ENCODE measurements at regions of chr20 and their contacts with region 1.

Region 1: DNA sequence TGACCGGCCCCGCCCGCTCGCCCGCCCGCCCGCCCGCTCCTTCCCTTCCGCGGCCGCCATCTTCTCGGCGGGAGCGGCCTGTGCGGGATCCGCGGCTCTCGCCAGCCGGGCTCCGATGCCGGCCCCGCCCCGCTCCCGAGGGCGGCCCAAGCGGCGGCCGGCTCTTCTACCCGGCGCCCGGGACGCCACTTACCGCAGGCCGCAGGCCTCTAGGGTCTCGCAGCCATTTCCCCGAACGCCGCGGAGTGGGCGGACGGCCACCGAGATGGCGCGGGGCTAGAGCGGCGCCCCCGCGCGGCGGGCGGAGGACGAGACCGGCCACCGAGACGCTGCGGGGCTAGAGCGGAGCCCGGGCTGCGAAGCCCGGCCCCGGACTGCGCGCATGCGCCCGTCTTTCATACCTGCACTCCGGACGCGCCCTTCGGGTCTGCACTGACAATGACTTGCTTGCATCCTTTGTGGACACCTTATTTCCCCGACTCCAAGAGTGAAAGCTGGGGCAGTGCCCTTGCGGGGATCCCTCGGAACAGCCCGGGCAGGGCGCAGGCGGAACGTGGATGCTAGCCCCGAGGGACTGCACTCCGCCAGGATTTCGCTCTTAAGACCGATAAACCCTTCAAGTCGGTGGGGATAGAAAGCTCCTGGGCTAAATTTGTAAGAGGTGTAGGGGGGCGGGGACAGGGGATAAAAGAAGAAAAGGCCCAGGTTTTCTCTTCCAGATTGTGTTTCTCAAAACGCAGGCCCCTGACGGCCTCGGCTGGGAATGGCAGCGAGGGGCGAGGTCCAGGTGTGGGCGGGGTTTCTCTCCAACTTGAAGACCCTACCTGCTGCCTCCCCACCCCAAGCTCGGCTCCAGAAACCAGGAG is at the start of gene DIDO1:
- DNase-seq: peak in 1 of 2 experiments; percentile 90
- H3K4me3 ChIP-seq: peak within 1 kb of the TSS; percentile 76 to 99 (median 94)
- H3K27ac ChIP-seq: peak within 1 kb of the TSS; percentile 86
- H3K4me1 ChIP-seq: peaks cover 9 to 39% (median 23%) of the 10 kb centered on the region in 4 experiments
- H3K27me3 ChIP-seq: no peaks in the 10 kb centered on the region
- CTCF ChIP-seq: peak; percentile 28 to 45 (median 43)
- EP300 ChIP-seq: no peak
- POLR2A ChIP-seq: peak in 1 of 2 experiments; percentile 40
- RAD21 ChIP-seq: no peak
- total RNA-seq, gene DIDO1: 82.8 and 83.2 TPM in 2 replicates

Region 2: GRCh38 chr20:62815066-62815991 is 111.1 kb before region 1 on chr20:
- CTCF ChIA-PET with region 1: no interaction called
- POLR2A ChIA-PET with region 1: interaction called, 10 read pairs
- DNase-seq: peak; percentile 54 to 73
- H3K4me3 ChIP-seq: peak overlapping the region; percentile 54 to 71 (median 63)
- H3K27ac ChIP-seq: no peak overlapping the region; the same call in 1 of the 2 replicates
- H3K4me1 ChIP-seq: peaks cover 0 to 17% (median 11%) of the 10 kb centered on the region in 4 experiments; a peak in 5 of 7 replicates
- H3K27me3 ChIP-seq: peaks cover 0 to 8% (median 2%) of the 10 kb centered on the region in 4 experiments; a peak in 2 of 7 replicates
- CTCF ChIP-seq: no peak
- EP300 ChIP-seq: no peak
- POLR2A ChIP-seq: no peak
- RAD21 ChIP-seq: no peak

Region 3: GRCh38 chr20:62875419-62876361 is 50.8 kb before region 1 on chr20:
- CTCF ChIA-PET with region 1: interaction called, 4 read pairs
- POLR2A ChIA-PET with region 1: interaction called, 15 read pairs
- DNase-seq: no peak
- H3K4me3 ChIP-seq: no peak overlapping the region
- H3K27ac ChIP-seq: no peak overlapping the region
- H3K4me1 ChIP-seq: peaks cover 0 to 3% (median 0%) of the 10 kb centered on the region in 4 experiments; a peak in 3 of 7 replicates
- H3K27me3 ChIP-seq: no peaks in the 10 kb centered on the region
- CTCF ChIP-seq: no peak
- EP300 ChIP-seq: no peak
- POLR2A ChIP-seq: no peak
- RAD21 ChIP-seq: no peak

Region 4: GRCh38 chr20:62914970-62915457 is 11.5 kb before region 1 on chr20:
- CTCF ChIA-PET with region 1: interaction called, 58 read pairs
- POLR2A ChIA-PET with region 1: interaction called, 156 read pairs
- DNase-seq: no peak
- H3K4me3 ChIP-seq: no peak overlapping the region; a peak in 1 of 8 replicates
- H3K27ac ChIP-seq: peak overlapping the region; percentile 35; the same call in 1 of the 2 replicates
- H3K4me1 ChIP-seq: peaks cover 14 to 37% (median 34%) of the 10 kb centered on the region in 4 experiments; a peak in 6 of 7 replicates
- H3K27me3 ChIP-seq: no peaks in the 10 kb centered on the region
- CTCF ChIP-seq: no peak
- EP300 ChIP-seq: peak in 1 of 2 experiments; percentile 58; a peak in 1 of 3 replicates
- POLR2A ChIP-seq: peak; percentile 54 to 68; a peak in 2 of 3 replicates
- RAD21 ChIP-seq: no peak

Region 5: DNA sequence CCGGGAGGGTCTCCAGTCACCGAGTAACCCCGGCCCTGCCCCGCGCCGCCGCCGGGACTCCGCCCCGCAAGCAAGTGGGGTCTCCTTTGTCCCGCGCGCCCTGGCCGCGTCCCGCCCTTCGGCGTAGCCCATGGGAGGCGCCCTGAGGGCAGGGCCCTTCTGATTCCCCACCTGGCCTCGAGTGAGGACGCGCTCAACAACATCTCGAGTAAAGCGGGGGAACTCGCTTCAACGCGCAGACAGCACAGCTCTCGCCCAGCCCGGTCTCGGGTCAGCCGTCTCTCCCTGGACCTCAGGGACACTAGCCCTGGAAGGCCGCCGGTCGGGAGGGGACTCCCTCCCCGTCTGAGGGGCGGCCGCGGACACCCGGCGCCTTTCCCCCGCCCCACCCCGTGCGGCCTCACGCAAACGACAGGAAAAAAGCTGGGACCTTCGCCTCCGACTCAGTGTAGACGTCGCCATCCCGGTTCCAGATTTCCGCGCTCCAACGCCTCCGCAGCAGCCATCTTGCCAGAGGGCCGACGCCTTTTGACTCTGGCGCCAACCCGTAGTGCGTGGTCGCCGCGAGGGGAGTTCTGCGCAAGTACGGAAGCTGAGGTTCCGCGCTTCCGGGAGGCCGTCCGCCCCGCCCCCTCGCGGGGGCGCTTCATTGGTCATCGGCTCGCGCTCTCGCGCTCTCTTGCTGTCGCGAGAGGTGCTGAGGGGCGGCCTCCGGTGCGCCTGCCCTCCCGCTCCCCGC is 11.1 kb after region 1 on chr20:
- CTCF ChIA-PET with region 1: interaction called, 22 read pairs
- POLR2A ChIA-PET with region 1: interaction called, 363 read pairs
- DNase-seq: peak; percentile 91 to 96
- H3K4me3 ChIP-seq: peak overlapping the region; percentile 89 to 98 (median 94)
- H3K27ac ChIP-seq: peak overlapping the region; percentile 95
- H3K4me1 ChIP-seq: peaks cover 3 to 21% (median 11%) of the 10 kb centered on the region in 4 experiments
- H3K27me3 ChIP-seq: no peaks in the 10 kb centered on the region
- CTCF ChIP-seq: no peak
- EP300 ChIP-seq: no peak
- POLR2A ChIP-seq: peak; percentile 92 to 95; a peak in 2 of 3 replicates
- RAD21 ChIP-seq: no peak

Region 6: DNA sequence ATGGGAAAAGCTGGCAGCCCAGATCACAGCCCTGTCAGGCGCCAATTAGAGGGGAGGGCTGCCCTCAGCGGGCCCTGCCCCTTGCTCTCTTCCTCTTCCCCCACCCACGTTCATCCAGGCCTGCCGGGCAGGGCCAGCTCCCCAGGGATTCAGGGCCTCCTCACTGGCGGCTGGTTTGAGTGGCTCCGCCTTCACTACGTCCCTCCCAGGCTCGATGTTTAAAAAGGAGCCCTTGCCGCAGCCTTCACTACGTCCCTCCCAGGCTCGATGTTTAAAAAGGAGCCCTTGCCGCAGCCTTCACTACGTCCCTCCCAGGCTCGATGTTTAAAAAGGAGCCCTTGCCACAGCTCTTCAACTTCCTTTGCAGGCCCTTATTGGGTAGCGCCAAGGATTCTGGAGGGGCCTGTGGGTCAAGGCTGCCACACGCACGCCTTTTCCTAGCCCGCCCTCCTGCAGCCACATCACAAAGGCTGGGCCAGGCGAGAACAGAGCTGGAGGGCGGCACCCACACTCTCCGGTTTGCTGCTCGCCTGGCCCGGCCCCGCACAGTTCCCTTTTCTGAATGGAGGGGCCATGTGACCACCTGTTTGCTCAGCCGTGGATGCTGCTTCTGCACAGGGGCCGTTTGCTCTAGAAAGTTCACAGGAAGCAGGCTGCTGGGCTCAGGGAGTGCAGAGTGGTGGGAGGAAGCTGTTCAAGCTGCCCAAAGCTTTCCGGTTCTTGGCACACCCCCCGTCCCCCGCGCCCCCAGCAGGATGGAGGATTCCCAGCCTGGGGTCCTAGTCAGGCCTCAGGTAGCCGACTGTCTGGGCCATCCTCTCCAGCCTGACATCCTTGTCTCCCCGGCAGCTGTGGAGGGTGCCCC is 27.6 kb after region 1 on chr20:
- CTCF ChIA-PET with region 1: interaction called, 6 read pairs
- POLR2A ChIA-PET with region 1: interaction called, 363 read pairs
- DNase-seq: peak in 1 of 2 experiments; percentile 67
- H3K4me3 ChIP-seq: peak overlapping the region; percentile 1 to 61 (median 40); a peak in 6 of 8 replicates
- H3K27ac ChIP-seq: no peak overlapping the region
- H3K4me1 ChIP-seq: peaks cover 2 to 23% (median 17%) of the 10 kb centered on the region in 4 experiments
- H3K27me3 ChIP-seq: no peaks in the 10 kb centered on the region
- CTCF ChIP-seq: no peak
- EP300 ChIP-seq: no peak
- POLR2A ChIP-seq: no peak
- RAD21 ChIP-seq: no peak

Measured in H1 (cell line).